Activated CD4-positive, alpha-beta memory T cell treated with anti-CD3 and anti-CD28 coated beads, Interleukin-2, amount 10 ng/mL, durations not matched to agents 7 days and 5 days (primary cell): ENCODE measurements at regions of chr6 and their contacts with region 1.

Region 1: GRCh38 chr6:152969688-152970418 is 13.0 kb downstream of the FBXO5 start:
- DNase-seq: no peak
- H3K4me3 Mint-ChIP-seq: no peak overlapping the region
- H3K27ac Mint-ChIP-seq: no peak overlapping the region
- H3K4me1 Mint-ChIP-seq: peaks cover 19% of the 10 kb centered on the region
- H3K27me3 Mint-ChIP-seq: peaks cover 19% of the 10 kb centered on the region

Region 2: DNA sequence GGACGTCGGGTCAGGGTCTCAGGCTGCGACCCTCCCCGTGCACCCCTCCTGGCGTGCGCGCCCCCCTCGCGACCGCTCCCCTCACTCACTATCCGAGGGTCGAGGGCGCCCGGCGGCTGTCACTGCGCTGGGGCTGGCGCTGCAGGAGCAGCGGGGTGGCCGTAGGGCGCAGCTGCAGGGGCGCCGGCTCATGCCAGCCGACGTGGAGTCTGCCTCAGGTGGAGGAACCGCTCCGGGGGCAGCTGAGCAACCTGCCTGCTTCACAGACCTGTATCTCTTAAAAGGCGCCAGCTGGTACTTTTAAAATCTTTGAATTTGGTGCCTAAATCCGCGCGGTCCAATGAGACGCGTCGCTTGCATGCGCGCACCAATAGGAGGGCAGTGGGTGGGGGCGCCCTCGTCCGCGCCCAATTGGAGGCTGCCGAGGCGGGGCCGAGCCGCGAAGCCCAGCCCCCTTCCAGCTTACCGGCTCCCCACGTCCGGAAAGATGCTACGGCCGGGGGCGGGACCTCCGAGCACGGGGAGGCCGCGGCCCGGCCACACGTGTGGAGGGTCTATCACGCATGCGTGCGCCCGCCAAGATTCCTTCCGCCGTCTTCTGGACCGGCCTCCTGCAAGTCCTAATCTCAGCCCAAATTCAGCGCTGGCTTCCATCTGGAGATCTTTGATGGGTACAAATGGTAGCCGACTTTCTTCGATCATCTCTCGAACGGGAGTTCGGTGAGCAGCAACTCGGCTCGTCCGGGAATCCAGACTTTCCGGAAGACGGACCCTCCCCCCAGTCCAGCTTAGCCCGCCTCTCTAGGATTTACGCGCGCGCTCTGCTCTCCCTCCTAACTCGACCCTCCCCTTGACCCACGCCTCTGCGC is 13.1 kb after region 1 on chr6 and contains the start of gene FBXO5:
- CTCF ChIA-PET with region 1: interaction called, 3 read pairs
- POLR2A ChIA-PET with region 1: interaction called, 25 read pairs
- DNase-seq: peak; percentile 98
- H3K4me3 Mint-ChIP-seq: peak within 1 kb of the TSS; percentile 90
- H3K27ac Mint-ChIP-seq: peak within 1 kb of the TSS; percentile 96
- H3K4me1 Mint-ChIP-seq: peaks cover 51% of the 10 kb centered on the region
- H3K27me3 Mint-ChIP-seq: no peaks in the 10 kb centered on the region
- total RNA-seq, gene FBXO5: 68.7 to 71.2 TPM

Region 3: GRCh38 chr6:153140299-153140698 is 170.4 kb after region 1 on chr6:
- CTCF ChIA-PET with region 1: no interaction called
- POLR2A ChIA-PET with region 1: no interaction called
- DNase-seq: no peak
- H3K4me3 Mint-ChIP-seq: no peak overlapping the region
- H3K27ac Mint-ChIP-seq: no peak overlapping the region
- H3K4me1 Mint-ChIP-seq: peaks cover 2% of the 10 kb centered on the region
- H3K27me3 Mint-ChIP-seq: no peaks in the 10 kb centered on the region